MCF 10A (cell line): ENCODE measurements at regions of chr13 and their contacts with region 1.

Region 1: GRCh38 chr13:45280751-45281634 is 60.0 kb downstream of the TPT1 start:
- DNase-seq: peak; percentile 92
- H3K4me3 Mint-ChIP-seq: no peak overlapping the region
- H3K27ac Mint-ChIP-seq: no peak overlapping the region
- H3K4me1 Mint-ChIP-seq: peaks cover 5% of the 10 kb centered on the region
- H3K27me3 Mint-ChIP-seq: no peaks in the 10 kb centered on the region
- CTCF ChIP-seq: peak; percentile 83

Region 2: GRCh38 chr13:45047394-45048310 is 233.3 kb before region 1 on chr13:
- CTCF ChIA-PET with region 1: interaction called, 74 read pairs
- POLR2A ChIA-PET with region 1: interaction called, 14 read pairs
- intact Hi-C with region 1: loop called (anchors 1 kb)
- DNase-seq: peak; percentile 86
- H3K4me3 Mint-ChIP-seq: peak overlapping the region; percentile 64
- H3K27ac Mint-ChIP-seq: no peak overlapping the region
- H3K4me1 Mint-ChIP-seq: peaks cover 10% of the 10 kb centered on the region
- H3K27me3 Mint-ChIP-seq: no peaks in the 10 kb centered on the region
- CTCF ChIP-seq: peak; percentile 92

Region 3: DNA sequence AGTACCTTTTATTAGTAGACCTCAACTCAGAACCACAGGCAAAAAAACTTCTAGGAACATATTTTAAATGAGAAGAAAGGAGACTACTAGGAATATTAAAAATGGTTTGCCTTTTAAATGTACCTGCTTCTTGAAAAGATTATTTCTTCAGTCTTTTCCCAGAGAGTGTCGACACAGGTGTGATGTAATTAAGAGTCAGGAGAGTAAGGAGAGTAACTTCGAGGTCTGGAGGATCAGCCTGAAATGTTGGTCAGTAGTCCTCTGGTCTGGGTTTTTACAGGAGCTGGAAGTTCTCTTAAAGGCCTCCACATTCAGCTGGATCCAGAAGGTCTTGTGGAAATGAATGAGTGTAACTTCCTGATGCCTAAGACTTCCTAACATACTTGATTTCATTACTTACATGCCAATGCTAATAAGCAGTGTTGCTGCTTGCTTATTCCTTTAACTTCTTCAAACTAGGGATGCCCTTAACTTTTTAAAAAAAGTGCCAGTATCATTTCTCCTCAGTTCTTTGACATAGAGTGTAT is 80.2 kb before region 1 on chr13 and contains the start of gene KCTD4:
- CTCF ChIA-PET with region 1: interaction called, 65 read pairs
- POLR2A ChIA-PET with region 1: interaction called, 7 read pairs
- intact Hi-C with region 1: no loop called
- DNase-seq: peak; percentile 42
- H3K4me3 Mint-ChIP-seq: no peak within 1 kb of the TSS
- H3K27ac Mint-ChIP-seq: peak within 1 kb of the TSS; percentile 8
- H3K4me1 Mint-ChIP-seq: peaks cover 34% of the 10 kb centered on the region
- H3K27me3 Mint-ChIP-seq: no peaks in the 10 kb centered on the region
- CTCF ChIP-seq: no peak
- total RNA-seq, gene KCTD4: 0.54 and 0.79 TPM in 2 replicates

Region 4: GRCh38 chr13:45269204-45269603 is 11.8 kb before region 1 on chr13:
- CTCF ChIA-PET with region 1: interaction called, 10 read pairs
- POLR2A ChIA-PET with region 1: interaction called, 3 read pairs
- intact Hi-C with region 1: no loop called
- DNase-seq: peak; percentile 18
- H3K4me3 Mint-ChIP-seq: no peak overlapping the region
- H3K27ac Mint-ChIP-seq: no peak overlapping the region
- H3K4me1 Mint-ChIP-seq: no peaks in the 10 kb centered on the region
- H3K27me3 Mint-ChIP-seq: no peaks in the 10 kb centered on the region
- CTCF ChIP-seq: no peak

Region 5: DNA sequence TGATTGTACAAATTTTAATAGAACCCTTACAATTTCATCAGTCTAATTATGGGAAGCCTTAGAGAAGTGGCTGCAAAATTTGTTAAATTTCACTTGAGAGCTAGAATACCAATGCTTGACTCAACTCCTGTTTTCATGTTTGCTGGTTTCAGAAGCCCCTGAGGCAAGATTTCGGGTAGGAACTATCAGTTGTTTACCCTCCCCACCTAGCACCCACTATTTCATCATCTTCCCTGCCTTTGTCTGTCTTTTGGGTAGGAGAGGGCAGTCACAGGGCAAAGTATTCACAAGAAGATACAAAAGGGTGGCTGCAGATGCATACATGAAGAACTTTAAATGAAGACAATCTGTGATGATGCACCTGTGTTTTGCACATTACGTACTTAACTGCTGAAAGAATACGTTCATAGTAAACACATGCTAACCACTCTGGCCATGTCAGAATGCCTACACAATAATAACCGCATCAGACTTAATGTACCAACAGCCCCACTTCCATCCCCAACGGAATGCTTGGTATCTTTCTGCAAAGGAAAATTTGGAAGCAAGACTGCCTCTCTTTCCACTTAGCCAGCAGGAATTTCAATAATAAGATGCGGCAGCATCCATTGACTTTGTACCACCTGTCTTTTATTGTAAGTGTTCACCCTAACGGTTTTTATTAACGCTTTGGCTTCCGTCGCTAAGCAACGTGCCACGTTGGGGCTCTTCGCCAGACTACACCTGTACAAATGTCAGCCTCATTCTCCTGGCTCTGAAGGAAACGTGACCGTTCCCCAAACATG is 29.5 kb after region 1 on chr13:
- CTCF ChIA-PET with region 1: interaction called, 18 read pairs
- POLR2A ChIA-PET with region 1: no interaction called
- intact Hi-C with region 1: loop called (anchors 1 kb)
- DNase-seq: no peak
- H3K4me3 Mint-ChIP-seq: peak overlapping the region; percentile 6
- H3K27ac Mint-ChIP-seq: no peak overlapping the region
- H3K4me1 Mint-ChIP-seq: peaks cover 10% of the 10 kb centered on the region
- H3K27me3 Mint-ChIP-seq: no peaks in the 10 kb centered on the region
- CTCF ChIP-seq: no peak

Region 6: GRCh38 chr13:45367358-45367757 is 86.4 kb after region 1 on chr13:
- CTCF ChIA-PET with region 1: no interaction called
- POLR2A ChIA-PET with region 1: no interaction called
- intact Hi-C with region 1: no loop called
- DNase-seq: peak; percentile 98
- H3K4me3 Mint-ChIP-seq: peak overlapping the region; percentile 12
- H3K27ac Mint-ChIP-seq: peak overlapping the region; percentile 95
- H3K4me1 Mint-ChIP-seq: peaks cover 35% of the 10 kb centered on the region
- H3K27me3 Mint-ChIP-seq: no peaks in the 10 kb centered on the region
- CTCF ChIP-seq: no peak

Region 7: GRCh38 chr13:46010148-46010547 is 729.2 kb after region 1 on chr13:
- CTCF ChIA-PET with region 1: no interaction called
- POLR2A ChIA-PET with region 1: no interaction called
- intact Hi-C with region 1: no loop called
- DNase-seq: peak; percentile 17
- H3K4me3 Mint-ChIP-seq: no peak overlapping the region
- H3K27ac Mint-ChIP-seq: no peak overlapping the region
- H3K4me1 Mint-ChIP-seq: no peaks in the 10 kb centered on the region
- H3K27me3 Mint-ChIP-seq: no peaks in the 10 kb centered on the region
- CTCF ChIP-seq: peak; percentile 11